ENCODE measurements at regions of chr1 and their contacts with region 1.

Region 1: GRCh38 chr1:181088079-181089016 is at the start of gene IER5:
- DNase-seq: peak; percentile 99
- ATAC-seq: peak; percentile 74
- H3K4me3 ChIP-seq: peak within 1 kb of the TSS; percentile 94 to 99 (median 95)
- H3K4me3 Mint-ChIP-seq: peak within 1 kb of the TSS; percentile 100
- H3K27ac ChIP-seq: peak within 1 kb of the TSS; percentile 98 to 99
- H3K27ac Mint-ChIP-seq: peak within 1 kb of the TSS; percentile 100
- H3K4me1 ChIP-seq: peaks cover 42 to 48% of the 10 kb centered on the region in 2 donors
- H3K4me1 Mint-ChIP-seq: peaks cover 49% of the 10 kb centered on the region
- H3K27me3 ChIP-seq: no peaks in the 10 kb centered on the region
- H3K27me3 Mint-ChIP-seq: no peaks in the 10 kb centered on the region
- CTCF ChIP-seq: no peak
- total RNA-seq, gene IER5: 96.9 and 98.1 TPM in 2 replicates

Region 2: GRCh38 chr1:179882243-179883039 is 1205.9 kb before region 1 on chr1 and contains the start of gene TOR1AIP1:
- CTCF ChIA-PET with region 1: no interaction called
- POLR2A ChIA-PET with region 1: no interaction called
- intact Hi-C with region 1: loop called (anchors 2 kb)
- DNase-seq: peak; percentile 100
- ATAC-seq: peak; percentile 75
- H3K4me3 ChIP-seq: peak within 1 kb of the TSS; percentile 78 to 99 (median 96)
- H3K4me3 Mint-ChIP-seq: peak within 1 kb of the TSS; percentile 99
- H3K27ac ChIP-seq: peak within 1 kb of the TSS; percentile 99 to 100
- H3K27ac Mint-ChIP-seq: peak within 1 kb of the TSS; percentile 100
- H3K4me1 ChIP-seq: peaks cover 20 to 40% of the 10 kb centered on the region in 2 donors
- H3K4me1 Mint-ChIP-seq: peaks cover 53% of the 10 kb centered on the region
- H3K27me3 ChIP-seq: no peaks in the 10 kb centered on the region
- H3K27me3 Mint-ChIP-seq: no peaks in the 10 kb centered on the region
- CTCF ChIP-seq: peak; percentile 59
- total RNA-seq, gene TOR1AIP1: 43.3 and 50.0 TPM in 2 replicates

Region 3: GRCh38 chr1:180881806-180882509 is 206.4 kb before region 1 on chr1:
- CTCF ChIA-PET with region 1: interaction called, 4 read pairs
- POLR2A ChIA-PET with region 1: no interaction called
- intact Hi-C with region 1: loop called (anchors 2 kb)
- DNase-seq: peak; percentile 37
- ATAC-seq: no peak
- H3K4me3 ChIP-seq: no peak overlapping the region
- H3K4me3 Mint-ChIP-seq: no peak overlapping the region
- H3K27ac ChIP-seq: no peak overlapping the region
- H3K27ac Mint-ChIP-seq: no peak overlapping the region
- H3K4me1 ChIP-seq: no peaks in the 10 kb centered on the region
- H3K4me1 Mint-ChIP-seq: no peaks in the 10 kb centered on the region
- H3K27me3 ChIP-seq: no peaks in the 10 kb centered on the region
- H3K27me3 Mint-ChIP-seq: no peaks in the 10 kb centered on the region
- CTCF ChIP-seq: peak; percentile 47

Region 4: DNA sequence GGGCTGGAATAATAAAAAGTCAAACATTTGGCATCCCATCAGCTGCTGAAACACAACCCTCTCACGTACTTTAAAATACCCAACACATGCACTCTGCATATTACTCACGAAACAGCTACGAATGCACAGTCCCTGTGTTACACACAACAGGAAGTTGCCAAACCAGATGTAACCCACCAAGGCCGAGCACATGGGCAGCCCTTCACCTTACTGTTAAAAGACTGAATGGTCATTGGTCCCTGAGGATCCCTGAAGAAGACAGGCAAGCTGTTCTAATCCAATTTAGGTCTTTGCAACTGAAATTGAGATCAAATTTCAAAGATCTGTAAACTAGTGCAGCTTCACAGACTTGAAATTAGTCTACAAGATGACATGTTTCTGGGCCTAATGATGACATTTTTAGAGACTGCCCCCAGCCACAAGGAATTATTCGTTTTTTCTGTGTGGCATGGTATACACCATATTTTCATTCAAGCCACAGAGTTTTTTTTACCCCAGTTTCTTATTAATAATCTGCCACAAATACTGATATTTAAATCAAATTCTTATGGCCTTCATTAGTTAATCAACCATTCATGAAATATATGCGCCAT is 25.4 kb before region 1 on chr1:
- CTCF ChIA-PET with region 1: interaction called, 24 read pairs
- POLR2A ChIA-PET with region 1: interaction called, 34 read pairs
- intact Hi-C with region 1: loop called (anchors 1 kb)
- DNase-seq: no peak
- ATAC-seq: peak; percentile 53
- H3K4me3 ChIP-seq: peak overlapping the region in 4 of 5 experiments; percentile 15 to 53 (median 38)
- H3K4me3 Mint-ChIP-seq: peak overlapping the region; percentile 81
- H3K27ac ChIP-seq: peak overlapping the region; percentile 76 to 78
- H3K27ac Mint-ChIP-seq: peak overlapping the region; percentile 95
- H3K4me1 ChIP-seq: peaks cover 19 to 27% of the 10 kb centered on the region in 2 donors
- H3K4me1 Mint-ChIP-seq: peaks cover 31% of the 10 kb centered on the region
- H3K27me3 ChIP-seq: no peaks in the 10 kb centered on the region
- H3K27me3 Mint-ChIP-seq: no peaks in the 10 kb centered on the region
- CTCF ChIP-seq: no peak

Region 5: GRCh38 chr1:181128592-181129497 is 40.5 kb after region 1 on chr1:
- CTCF ChIA-PET with region 1: interaction called, 672 read pairs
- POLR2A ChIA-PET with region 1: interaction called, 109 read pairs
- intact Hi-C with region 1: loop called (anchors 1 kb)
- DNase-seq: peak; percentile 82
- ATAC-seq: peak; percentile 73
- H3K4me3 ChIP-seq: peak overlapping the region; percentile 18 to 66 (median 50)
- H3K4me3 Mint-ChIP-seq: peak overlapping the region; percentile 92
- H3K27ac ChIP-seq: peak overlapping the region; percentile 86 to 91
- H3K27ac Mint-ChIP-seq: peak overlapping the region; percentile 93
- H3K4me1 ChIP-seq: peaks cover 79 to 85% of the 10 kb centered on the region in 2 donors
- H3K4me1 Mint-ChIP-seq: peaks cover 84% of the 10 kb centered on the region
- H3K27me3 ChIP-seq: no peaks in the 10 kb centered on the region
- H3K27me3 Mint-ChIP-seq: no peaks in the 10 kb centered on the region
- CTCF ChIP-seq: no peak

Region 6: GRCh38 chr1:181152892-181153633 is 64.7 kb after region 1 on chr1:
- CTCF ChIA-PET with region 1: interaction called, 672 read pairs
- POLR2A ChIA-PET with region 1: interaction called, 4 read pairs
- intact Hi-C with region 1: loop called (anchors 1 kb)
- DNase-seq: peak; percentile 80
- ATAC-seq: peak; percentile 87
- H3K4me3 ChIP-seq: no peak overlapping the region
- H3K4me3 Mint-ChIP-seq: peak overlapping the region; percentile 54
- H3K27ac ChIP-seq: no peak overlapping the region
- H3K27ac Mint-ChIP-seq: peak overlapping the region; percentile 39
- H3K4me1 ChIP-seq: peaks cover 35 to 45% of the 10 kb centered on the region in 2 donors
- H3K4me1 Mint-ChIP-seq: peaks cover 49% of the 10 kb centered on the region
- H3K27me3 ChIP-seq: no peaks in the 10 kb centered on the region
- H3K27me3 Mint-ChIP-seq: no peaks in the 10 kb centered on the region
- CTCF ChIP-seq: peak; percentile 56